Activated T-helper 2 cell treated with anti-CD3 and anti-CD28 coated beads, Interferon-gamma antibody, Interleukin-2, Interleukin-4, amounts not matched to agents 10 μg/mL and 5 μg/mL and 100 μg/mL, durations not matched to agents 14 hours and 24 hours and 36 hours (primary cell): ENCODE measurements at regions of chr2 and their contacts with region 1.

Region 1: DNA sequence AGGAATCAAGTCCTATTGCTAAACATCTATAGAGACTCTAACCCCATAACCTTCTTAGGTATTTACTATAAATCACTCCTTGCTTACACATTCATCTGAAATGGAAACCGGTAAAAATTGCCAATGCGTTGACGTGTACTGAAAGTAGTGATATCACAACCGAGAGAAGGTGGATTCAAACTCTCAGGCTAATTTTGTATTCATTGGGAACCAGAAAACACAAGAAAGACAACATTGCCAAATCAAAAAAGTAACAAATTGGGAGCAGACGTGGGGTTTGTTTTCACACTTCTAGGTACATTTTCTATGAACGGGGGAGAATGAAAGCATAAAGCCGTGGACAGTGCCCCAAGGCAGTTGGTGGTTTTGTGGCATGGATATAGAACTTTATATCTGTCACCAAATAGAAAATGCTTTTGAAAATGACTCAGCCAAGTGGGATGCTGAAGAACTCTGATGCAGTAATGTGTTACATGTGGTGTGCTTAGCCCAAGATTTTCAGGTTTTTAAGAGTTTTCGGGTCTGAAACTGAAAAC is 155.1 kb upstream of the RASGRP3 start:
- DNase-seq: peak; percentile 41
- H3K4me3 Mint-ChIP-seq: peak overlapping the region; percentile 51
- H3K27ac Mint-ChIP-seq: peak overlapping the region; percentile 94
- H3K4me1 Mint-ChIP-seq: peaks cover 32% of the 10 kb centered on the region
- H3K27me3 Mint-ChIP-seq: peaks cover under 1% of the 10 kb centered on the region

Region 2: DNA sequence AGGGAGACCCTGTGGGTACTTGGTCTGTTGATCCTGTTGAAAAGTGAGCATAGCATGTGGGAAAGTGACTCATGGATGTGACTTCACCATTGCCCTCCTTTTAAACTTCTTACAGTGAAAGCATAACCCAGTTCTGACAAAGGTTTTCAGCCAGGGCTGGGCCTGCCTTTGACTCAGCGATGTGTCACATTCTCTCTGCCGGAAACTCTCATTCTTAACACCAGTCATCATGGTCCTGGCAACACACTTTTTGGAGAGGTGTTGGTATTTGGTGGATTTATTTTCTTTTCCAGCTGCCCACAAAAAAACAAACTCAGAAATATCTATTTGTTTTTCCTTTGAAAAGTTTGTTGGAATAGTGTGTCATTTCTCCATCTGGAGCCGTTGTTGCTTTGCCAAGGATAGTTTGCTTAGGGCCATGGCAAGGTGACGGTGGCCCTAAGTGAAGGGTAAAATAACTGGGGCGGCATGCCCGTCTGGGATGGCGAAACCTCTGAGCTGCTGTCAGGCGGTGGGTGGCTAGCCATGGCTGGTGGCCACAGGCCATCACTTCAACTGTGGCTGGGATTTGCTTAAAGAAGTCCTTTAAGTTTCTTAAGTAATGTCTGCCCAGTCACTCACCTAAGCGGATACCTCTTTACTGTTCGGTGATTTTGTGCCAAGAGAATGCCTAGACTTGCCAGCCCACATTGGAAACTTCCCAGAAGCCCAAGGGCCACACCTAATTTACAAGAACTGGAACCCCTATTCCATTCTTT is 251.2 kb before region 1 on chr2:
- intact Hi-C with region 1: loop called (anchors 1 kb)
- DNase-seq: no peak
- H3K4me3 Mint-ChIP-seq: no peak overlapping the region
- H3K27ac Mint-ChIP-seq: no peak overlapping the region
- H3K4me1 Mint-ChIP-seq: peaks cover 10% of the 10 kb centered on the region
- H3K27me3 Mint-ChIP-seq: peaks cover 4% of the 10 kb centered on the region

Region 3: GRCh38 chr2:33272001-33272400 is 49.3 kb before region 1 on chr2:
- intact Hi-C with region 1: loop called (anchors 1 kb)
- DNase-seq: no peak
- H3K4me3 Mint-ChIP-seq: no peak overlapping the region
- H3K27ac Mint-ChIP-seq: no peak overlapping the region
- H3K4me1 Mint-ChIP-seq: peaks cover 14% of the 10 kb centered on the region
- H3K27me3 Mint-ChIP-seq: peaks cover 39% of the 10 kb centered on the region

Region 4: DNA sequence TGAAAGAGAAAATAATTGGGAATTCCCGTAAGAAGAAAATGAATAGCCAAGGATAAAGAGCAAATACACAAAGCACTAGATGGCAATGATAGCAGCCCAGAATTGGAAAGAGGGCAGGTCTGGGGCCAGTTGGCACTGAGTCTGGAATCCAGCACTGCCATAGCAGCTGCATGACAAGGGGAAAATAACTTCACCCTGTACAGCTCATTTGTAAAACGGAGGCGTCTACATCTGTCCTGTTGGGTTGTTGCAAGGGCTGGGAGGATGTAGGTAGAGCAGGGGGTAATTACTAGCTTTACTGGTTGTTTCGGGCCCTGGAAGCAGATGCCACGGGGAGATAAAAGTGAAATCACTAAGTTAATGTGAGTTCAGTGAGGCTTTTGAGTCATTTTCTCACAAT is 45.2 kb after region 1 on chr2:
- intact Hi-C with region 1: loop called (anchors 1 kb)
- DNase-seq: no peak
- H3K4me3 Mint-ChIP-seq: no peak overlapping the region
- H3K27ac Mint-ChIP-seq: no peak overlapping the region
- H3K4me1 Mint-ChIP-seq: peaks cover 7% of the 10 kb centered on the region
- H3K27me3 Mint-ChIP-seq: peaks cover 5% of the 10 kb centered on the region

Region 5: DNA sequence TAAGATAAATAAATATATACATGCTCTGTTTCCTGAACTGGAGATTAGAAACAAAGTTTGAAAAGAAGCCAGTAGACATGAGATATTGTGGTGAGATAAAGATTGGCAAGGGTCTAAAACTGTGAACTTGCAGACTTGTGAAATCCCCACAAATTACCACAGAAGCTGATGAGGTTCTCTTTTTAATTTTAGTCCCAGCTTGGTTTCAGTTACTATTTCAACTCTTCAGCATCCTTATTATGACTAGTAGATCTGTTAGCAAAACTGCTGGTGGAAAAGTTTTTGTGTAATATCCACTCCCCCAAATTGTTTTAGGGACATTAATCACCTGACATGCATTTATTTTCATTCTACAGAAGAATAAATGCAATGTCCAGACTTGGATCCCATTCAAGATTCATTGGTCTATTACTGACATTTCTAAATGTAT is 175.9 kb after region 1 on chr2:
- intact Hi-C with region 1: loop called (anchors 1 kb)
- DNase-seq: no peak
- H3K4me3 Mint-ChIP-seq: peak overlapping the region; percentile 11
- H3K27ac Mint-ChIP-seq: no peak overlapping the region
- H3K4me1 Mint-ChIP-seq: peaks cover 53% of the 10 kb centered on the region
- H3K27me3 Mint-ChIP-seq: peaks cover 15% of the 10 kb centered on the region